HCT116 (cell line): ENCODE measurements at regions of chr12 and their contacts with region 1.

Region 1: GRCh38 chr12:20549107-20549719 is 145.9 kb upstream of the SLCO1C1 start:
- DNase-seq: peak; percentile 34
- ATAC-seq: peak; percentile 98
- H3K4me3 ChIP-seq: no peak overlapping the region
- H3K27ac ChIP-seq: no peak overlapping the region
- H3K4me1 ChIP-seq: no peaks in the 10 kb centered on the region
- H3K27me3 ChIP-seq: no peaks in the 10 kb centered on the region
- CTCF ChIP-seq: peak; percentile 43 to 78 (median 71); a peak in 5 of 6 replicates
- POLR2A ChIP-seq: no peak
- RAD21 ChIP-seq: peak; percentile 59

Region 2: DNA sequence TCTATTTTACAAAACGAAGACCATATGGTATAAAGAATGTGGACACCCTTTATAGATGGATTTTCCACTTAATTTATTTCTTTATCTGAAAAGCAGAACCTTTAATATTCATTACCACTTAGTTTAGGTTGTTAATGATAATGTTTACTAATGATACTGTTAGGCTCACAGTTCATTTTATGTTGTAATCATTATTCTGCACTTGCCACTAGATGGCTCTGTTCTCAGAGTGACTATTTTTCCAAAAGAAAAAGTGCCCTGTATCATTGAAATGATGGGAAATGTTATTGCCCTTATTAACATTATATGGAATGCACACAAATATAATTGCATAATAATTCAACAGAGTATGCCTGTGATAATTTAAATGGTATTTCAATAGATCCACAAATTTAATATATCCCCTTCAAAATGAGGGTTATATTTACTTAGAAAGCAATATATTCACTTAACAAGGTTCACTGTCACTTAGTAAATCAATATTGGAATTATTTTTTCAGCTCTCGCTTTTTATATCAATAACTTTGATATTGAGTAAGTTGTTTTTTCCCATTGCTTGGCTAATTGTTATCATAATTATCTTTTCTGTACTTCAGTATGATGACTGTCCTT is 85.2 kb before region 1 on chr12:
- CTCF ChIA-PET with region 1: interaction called, 4 read pairs
- POLR2A ChIA-PET with region 1: no interaction called
- RAD21 ChIA-PET with region 1: no interaction called
- intact Hi-C with region 1: loop called (anchors 2 kb)
- DNase-seq: no peak
- ATAC-seq: peak; percentile 50; the same call in 1 of the 2 replicates
- H3K4me3 ChIP-seq: no peak overlapping the region
- H3K27ac ChIP-seq: no peak overlapping the region
- H3K4me1 ChIP-seq: no peaks in the 10 kb centered on the region
- H3K27me3 ChIP-seq: no peaks in the 10 kb centered on the region
- CTCF ChIP-seq: peak; percentile 41 to 76 (median 59); a peak in 5 of 6 replicates
- POLR2A ChIP-seq: no peak
- RAD21 ChIP-seq: peak; percentile 52

Region 3: GRCh38 chr12:20561871-20562270 is 12.7 kb after region 1 on chr12:
- CTCF ChIA-PET with region 1: interaction called, 12 read pairs
- POLR2A ChIA-PET with region 1: no interaction called
- RAD21 ChIA-PET with region 1: no interaction called
- intact Hi-C with region 1: no loop called
- DNase-seq: no peak
- ATAC-seq: no peak
- H3K4me3 ChIP-seq: no peak overlapping the region
- H3K27ac ChIP-seq: no peak overlapping the region
- H3K4me1 ChIP-seq: no peaks in the 10 kb centered on the region
- H3K27me3 ChIP-seq: no peaks in the 10 kb centered on the region
- CTCF ChIP-seq: no peak
- POLR2A ChIP-seq: no peak
- RAD21 ChIP-seq: no peak